Activated T-helper 1 cell treated with anti-CD3 and anti-CD28 coated beads, Interleukin-12 subunit alpha, Interleukin-12 subunit beta, Interleukin-2, Interleukin-4 antibody, amounts not matched to agents 30 ng/mL and 10 ng/mL and 1 ng/mL, durations not matched to agents 14 hours and 24 hours and 36 hours (primary cell): ENCODE measurements at regions of chr7 and their contacts with region 1.

Region 1: GRCh38 chr7:16933296-16934279 is 51.8 kb upstream of the AGR3 start:
- DNase-seq: no peak
- H3K4me3 Mint-ChIP-seq: peak overlapping the region; percentile 44
- H3K27ac Mint-ChIP-seq: peak overlapping the region; percentile 57
- H3K4me1 Mint-ChIP-seq: peaks cover 54% of the 10 kb centered on the region
- H3K27me3 Mint-ChIP-seq: no peaks in the 10 kb centered on the region

Region 2: GRCh38 chr7:16851829-16852228 is 81.8 kb before region 1 on chr7:
- intact Hi-C with region 1: no loop called
- DNase-seq: no peak
- H3K4me3 Mint-ChIP-seq: no peak overlapping the region
- H3K27ac Mint-ChIP-seq: no peak overlapping the region
- H3K4me1 Mint-ChIP-seq: no peaks in the 10 kb centered on the region
- H3K27me3 Mint-ChIP-seq: peaks cover 15% of the 10 kb centered on the region

Region 3: GRCh38 chr7:16918288-16918895 is 15.2 kb before region 1 on chr7:
- intact Hi-C with region 1: no loop called
- DNase-seq: no peak
- H3K4me3 Mint-ChIP-seq: no peak overlapping the region
- H3K27ac Mint-ChIP-seq: no peak overlapping the region
- H3K4me1 Mint-ChIP-seq: peaks cover 8% of the 10 kb centered on the region
- H3K27me3 Mint-ChIP-seq: no peaks in the 10 kb centered on the region

Region 4: GRCh38 chr7:16999541-17000267 is 66.1 kb after region 1 on chr7:
- intact Hi-C with region 1: loop called (anchors 1 kb)
- DNase-seq: peak; percentile 14
- H3K4me3 Mint-ChIP-seq: peak overlapping the region; percentile 62
- H3K27ac Mint-ChIP-seq: peak overlapping the region; percentile 77
- H3K4me1 Mint-ChIP-seq: peaks cover 17% of the 10 kb centered on the region
- H3K27me3 Mint-ChIP-seq: peaks cover 4% of the 10 kb centered on the region

Region 5: DNA sequence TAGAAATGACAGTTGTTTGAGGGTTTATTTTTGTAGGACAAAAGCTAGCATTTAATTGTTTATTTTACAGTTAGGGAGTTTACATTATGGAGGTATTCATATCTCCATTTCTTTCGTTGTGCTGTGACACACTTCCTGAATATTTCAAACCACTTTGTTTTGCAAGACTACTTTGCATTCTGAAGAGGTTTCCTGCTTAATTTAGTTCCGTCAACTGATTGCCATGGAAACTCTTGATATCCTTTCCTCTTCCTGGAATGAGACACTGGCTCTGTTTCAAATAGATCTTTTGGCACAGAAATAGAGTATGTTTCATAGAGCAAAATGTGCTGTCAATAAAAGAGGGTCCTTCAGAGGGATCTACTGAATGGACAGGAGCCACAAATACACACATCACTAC is 107.7 kb after region 1 on chr7:
- intact Hi-C with region 1: loop called (anchors 5 kb)
- DNase-seq: no peak
- H3K4me3 Mint-ChIP-seq: no peak overlapping the region
- H3K27ac Mint-ChIP-seq: no peak overlapping the region
- H3K4me1 Mint-ChIP-seq: peaks cover 20% of the 10 kb centered on the region
- H3K27me3 Mint-ChIP-seq: peaks cover 6% of the 10 kb centered on the region

Region 6: DNA sequence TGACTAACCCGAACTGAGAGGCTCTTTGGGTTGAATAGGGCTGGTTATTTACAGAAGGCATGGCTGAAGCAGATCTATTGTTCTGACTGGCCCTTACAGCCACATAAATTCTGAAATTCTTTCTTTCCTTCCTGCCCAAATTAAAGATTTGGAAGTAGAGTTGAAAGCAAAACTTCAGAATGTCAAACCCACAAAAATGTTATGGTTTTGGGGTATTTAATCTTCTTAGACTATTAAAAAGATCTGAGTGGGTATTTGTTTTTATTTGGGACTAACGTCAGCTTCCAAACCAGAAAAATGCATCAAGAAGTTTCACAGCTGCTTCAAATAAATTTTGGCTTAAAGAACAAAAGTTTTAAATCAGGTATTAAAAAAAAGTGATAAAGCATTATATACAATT is 489.4 kb after region 1 on chr7:
- intact Hi-C with region 1: no loop called
- DNase-seq: no peak
- H3K4me3 Mint-ChIP-seq: no peak overlapping the region
- H3K27ac Mint-ChIP-seq: no peak overlapping the region
- H3K4me1 Mint-ChIP-seq: no peaks in the 10 kb centered on the region
- H3K27me3 Mint-ChIP-seq: peaks cover 1% of the 10 kb centered on the region